ENCODE measurements at regions of chr9 and their contacts with region 1.

Region 1: GRCh38 chr9:72038890-72039410 is 21.5 kb downstream of the C9orf57 start:
- DNase-seq: peak; percentile 59 to 81 (median 79)
- H3K4me3 ChIP-seq: no peak overlapping the region
- H3K27ac ChIP-seq: no peak overlapping the region
- H3K4me1 ChIP-seq: peaks cover 2% of the 10 kb centered on the region
- H3K27me3 ChIP-seq: no peaks in the 10 kb centered on the region
- CTCF ChIP-seq: peak; percentile 81 to 83 (median 82)
- EP300 ChIP-seq: no peak
- POLR2A ChIP-seq: no peak

Region 2: GRCh38 chr9:70656281-70656680 is 1382.7 kb before region 1 on chr9:
- intact Hi-C with region 1: no loop called
- DNase-seq: no peak
- H3K4me3 ChIP-seq: no peak overlapping the region
- H3K27ac ChIP-seq: no peak overlapping the region
- H3K4me1 ChIP-seq: no peaks in the 10 kb centered on the region
- H3K27me3 ChIP-seq: no peaks in the 10 kb centered on the region
- CTCF ChIP-seq: no peak
- EP300 ChIP-seq: no peak
- POLR2A ChIP-seq: no peak

Region 3: DNA sequence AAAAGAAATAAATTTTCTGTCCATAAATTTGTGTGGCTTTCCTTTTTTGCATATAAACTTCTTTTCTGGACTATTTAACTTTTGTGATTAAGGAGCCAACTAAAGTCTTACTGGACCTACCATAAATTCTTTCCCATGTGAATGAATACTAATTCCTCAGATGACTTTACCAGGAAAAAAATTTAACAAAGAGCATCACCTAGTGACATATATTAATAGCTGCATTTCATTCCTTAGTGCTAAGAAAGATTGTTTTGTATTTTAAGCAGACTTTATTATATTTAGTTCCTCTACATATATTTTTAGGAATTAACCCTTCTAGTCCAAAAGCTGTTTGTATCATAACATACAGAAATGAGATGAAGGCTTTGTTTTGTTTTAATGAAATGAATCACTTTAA is 63.1 kb before region 1 on chr9:
- intact Hi-C with region 1: no loop called
- DNase-seq: no peak
- H3K4me3 ChIP-seq: no peak overlapping the region
- H3K27ac ChIP-seq: no peak overlapping the region
- H3K4me1 ChIP-seq: no peaks in the 10 kb centered on the region
- H3K27me3 ChIP-seq: no peaks in the 10 kb centered on the region
- CTCF ChIP-seq: no peak
- EP300 ChIP-seq: no peak
- POLR2A ChIP-seq: no peak

Region 4: DNA sequence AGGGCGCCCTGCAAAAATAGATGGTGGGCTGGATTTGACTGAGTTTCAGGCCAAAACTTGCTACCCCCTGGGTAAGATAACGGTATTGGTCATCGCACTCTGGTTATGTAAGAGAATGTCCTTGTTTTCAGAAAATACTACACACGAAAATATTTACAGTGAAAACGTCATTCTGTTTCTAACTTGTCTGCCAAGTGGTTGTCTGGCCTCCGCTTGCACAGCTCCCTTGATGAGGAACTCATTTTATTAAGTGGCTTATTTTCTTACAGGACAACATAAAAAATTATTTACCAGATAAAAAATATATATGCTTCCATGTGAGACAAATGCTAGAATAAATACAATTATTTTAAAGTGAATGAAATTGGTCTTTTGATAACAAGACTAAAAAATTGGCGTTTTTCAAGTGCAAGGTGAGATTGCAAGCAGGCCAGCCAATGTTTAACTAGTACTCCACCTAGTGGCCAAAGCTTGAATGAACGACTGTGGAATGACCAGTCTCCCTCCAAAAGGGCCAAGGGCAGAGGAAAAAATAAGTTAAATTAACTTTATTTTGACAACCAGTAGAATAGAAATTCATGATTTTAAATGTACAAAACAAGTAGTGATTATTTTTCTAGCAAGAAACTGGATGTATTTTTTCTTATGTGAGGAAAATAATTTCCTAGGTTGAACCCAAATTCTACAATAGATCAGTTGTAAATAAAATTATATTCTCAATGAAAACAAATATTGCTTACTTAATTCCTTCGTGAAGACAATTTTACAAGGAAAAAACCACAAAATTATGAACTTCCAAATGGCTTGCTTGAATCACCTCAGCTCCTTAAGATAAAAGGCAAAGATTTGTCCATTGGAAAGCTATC is 232.9 kb after region 1 on chr9:
- intact Hi-C with region 1: loop called (anchors 2 to 5 kb)
- DNase-seq: peak in 3 of 5 donors; percentile 21 to 54 (median 49)
- H3K4me3 ChIP-seq: no peak overlapping the region
- H3K27ac ChIP-seq: peak overlapping the region in 1 of 2 donors; percentile 6
- H3K4me1 ChIP-seq: no peaks in the 10 kb centered on the region
- H3K27me3 ChIP-seq: no peaks in the 10 kb centered on the region
- CTCF ChIP-seq: peak; percentile 49 to 79 (median 69)
- EP300 ChIP-seq: no peak
- POLR2A ChIP-seq: no peak

Region 5: DNA sequence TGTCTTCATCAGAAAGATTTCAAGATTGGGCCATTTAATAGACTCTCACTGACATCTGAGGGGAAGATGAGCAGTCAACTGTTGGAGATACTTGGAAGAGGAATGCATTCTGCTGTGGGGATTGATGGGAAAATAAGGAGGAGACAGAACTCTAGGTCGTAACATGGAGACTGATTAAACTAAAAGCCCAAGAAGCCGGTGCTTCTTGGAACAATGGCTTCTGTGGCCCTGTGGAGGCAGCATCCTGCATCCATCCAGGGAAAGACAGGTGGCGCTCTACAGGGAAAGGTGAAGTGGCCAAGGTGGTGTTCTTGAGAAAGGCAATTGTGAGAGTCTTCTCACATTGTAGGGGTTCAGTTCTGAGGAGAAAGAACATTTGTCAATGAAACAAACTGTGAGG is 294.8 kb after region 1 on chr9:
- intact Hi-C with region 1: no loop called
- DNase-seq: no peak
- H3K4me3 ChIP-seq: no peak overlapping the region
- H3K27ac ChIP-seq: no peak overlapping the region
- H3K4me1 ChIP-seq: no peaks in the 10 kb centered on the region
- H3K27me3 ChIP-seq: no peaks in the 10 kb centered on the region
- CTCF ChIP-seq: no peak
- EP300 ChIP-seq: no peak
- POLR2A ChIP-seq: no peak

Region 6: DNA sequence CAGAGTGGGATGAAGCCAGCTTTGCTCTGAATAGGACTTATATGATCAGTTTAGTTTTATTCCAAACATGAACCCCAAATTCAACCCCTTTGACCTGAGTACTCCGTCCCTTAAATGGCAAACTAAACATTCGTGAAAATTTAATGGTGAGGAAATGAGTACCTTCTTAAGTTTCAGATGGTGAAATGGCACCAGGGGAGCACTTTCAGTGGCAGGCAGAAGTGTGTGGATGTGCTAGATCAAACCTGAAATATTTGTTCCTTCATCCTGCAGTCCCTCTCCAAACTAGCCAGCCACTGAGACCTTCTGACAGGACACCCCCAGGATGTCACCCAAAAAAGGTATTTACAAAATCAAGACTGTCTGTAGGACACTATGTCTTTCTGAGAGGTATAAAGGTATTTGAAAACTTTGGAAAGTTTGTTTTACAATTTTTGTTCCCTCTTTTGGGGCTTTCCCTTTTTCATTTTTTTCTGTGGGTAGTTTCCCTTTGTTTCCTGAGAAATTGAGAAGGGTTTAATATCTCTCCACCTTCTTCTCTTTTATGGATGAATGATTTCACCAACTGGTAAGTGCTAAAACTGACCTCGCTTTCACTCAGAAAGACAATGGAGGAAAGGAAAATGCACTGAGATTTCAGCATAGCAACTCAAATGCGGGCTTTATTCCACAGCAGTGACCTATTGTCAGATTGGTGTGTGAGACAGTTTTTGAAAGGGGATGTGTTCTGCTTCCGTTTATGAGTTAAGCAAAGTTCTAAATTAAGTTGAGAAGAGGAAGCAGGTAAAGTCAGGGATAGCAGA is 609.6 kb after region 1 on chr9:
- intact Hi-C with region 1: no loop called
- DNase-seq: no peak
- H3K4me3 ChIP-seq: no peak overlapping the region
- H3K27ac ChIP-seq: no peak overlapping the region
- H3K4me1 ChIP-seq: no peaks in the 10 kb centered on the region
- H3K27me3 ChIP-seq: no peaks in the 10 kb centered on the region
- CTCF ChIP-seq: no peak
- EP300 ChIP-seq: no peak
- POLR2A ChIP-seq: no peak

Measured in ovary (tissue), 10 donors.